Heart left ventricle (tissue), 16 donors: ENCODE measurements at regions of chr1 and their contacts with region 1.

Region 1: GRCh38 chr1:86704458-86704971 is at the start of gene SH3GLB1:
- DNase-seq: peak; percentile 88 to 94 (median 91)
- ATAC-seq: peak; percentile 83 to 96 (median 91)
- H3K4me3 ChIP-seq: peak within 1 kb of the TSS; percentile 63 to 96 (median 89)
- H3K27ac ChIP-seq: peak within 1 kb of the TSS; percentile 95 to 100 (median 99)
- H3K4me1 ChIP-seq: peaks cover 0 to 49% (median 36%) of the 10 kb centered on the region in 12 donors
- H3K27me3 ChIP-seq: no peaks in the 10 kb centered on the region
- CTCF ChIP-seq: peak; percentile 90 to 99 (median 97)
- POLR2A ChIP-seq: peak; percentile 14 to 64
- total RNA-seq, gene SH3GLB1: 53.6 to 203 (median 127) TPM

Region 2: DNA sequence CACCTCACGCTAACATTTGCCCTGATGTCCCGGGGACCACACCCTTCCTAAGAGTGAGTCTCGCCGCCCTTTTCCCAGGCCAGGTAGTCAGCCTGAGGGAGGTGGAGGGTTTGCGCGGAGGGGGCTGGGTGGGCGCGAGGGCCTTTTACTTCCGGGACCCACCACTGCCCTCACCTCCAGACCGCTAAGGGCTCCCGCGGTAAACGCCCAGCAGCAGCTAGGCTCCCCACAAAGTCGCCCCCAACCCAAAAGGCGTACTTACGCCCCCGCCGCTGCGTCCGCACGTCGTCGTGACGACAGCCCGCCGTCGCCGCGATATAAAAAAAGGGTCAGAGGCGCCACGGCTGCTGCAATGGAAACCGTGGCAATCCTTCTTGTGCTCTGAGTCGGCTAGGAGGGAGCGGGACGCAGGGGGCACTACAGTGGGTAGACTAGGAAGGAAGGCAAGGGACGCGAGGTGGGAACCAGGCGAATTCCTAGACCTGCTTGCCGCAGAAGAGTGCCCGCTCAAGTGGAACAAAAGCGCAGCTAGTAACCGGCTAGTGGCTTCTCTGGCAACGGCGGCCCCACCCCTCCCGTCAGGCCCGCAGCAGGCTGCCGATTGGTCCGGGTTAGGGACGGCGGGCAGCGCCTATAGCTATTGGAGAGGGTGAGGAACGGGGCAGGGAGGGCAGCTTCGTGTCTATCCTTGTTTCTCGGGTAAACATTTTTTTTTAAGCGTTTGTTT is 308.6 kb before region 1 on chr1 and contains the start of gene ODF2L:
- intact Hi-C with region 1: loop called in 3 of 10 experiments (anchors 5 to 10 kb)
- DNase-seq: peak; percentile 90 to 95 (median 92)
- ATAC-seq: peak; percentile 99 to 100 (median 100)
- H3K4me3 ChIP-seq: peak within 1 kb of the TSS; percentile 55 to 95 (median 82)
- H3K27ac ChIP-seq: peak within 1 kb of the TSS in 11 of 12 donors; percentile 66 to 89 (median 81)
- H3K4me1 ChIP-seq: peaks cover 0 to 30% (median 12%) of the 10 kb centered on the region in 12 donors
- H3K27me3 ChIP-seq: no peaks in the 10 kb centered on the region
- CTCF ChIP-seq: no peak
- POLR2A ChIP-seq: peak in 1 of 2 donors; percentile 78
- total RNA-seq, gene ODF2L: 6.2 to 23.7 (median 12.3) TPM

Region 3: GRCh38 chr1:86499987-86500593 is 204.4 kb before region 1 on chr1:
- intact Hi-C with region 1: loop called in 5 of 10 experiments (anchors 2 to 10 kb)
- DNase-seq: no peak
- ATAC-seq: no peak
- H3K4me3 ChIP-seq: no peak overlapping the region
- H3K27ac ChIP-seq: peak overlapping the region in 6 of 12 donors; percentile 10 to 94 (median 41)
- H3K4me1 ChIP-seq: peaks cover 0 to 37% (median 16%) of the 10 kb centered on the region in 12 donors
- H3K27me3 ChIP-seq: no peaks in the 10 kb centered on the region
- CTCF ChIP-seq: peak; percentile 73 to 99 (median 89)
- POLR2A ChIP-seq: no peak

Region 4: DNA sequence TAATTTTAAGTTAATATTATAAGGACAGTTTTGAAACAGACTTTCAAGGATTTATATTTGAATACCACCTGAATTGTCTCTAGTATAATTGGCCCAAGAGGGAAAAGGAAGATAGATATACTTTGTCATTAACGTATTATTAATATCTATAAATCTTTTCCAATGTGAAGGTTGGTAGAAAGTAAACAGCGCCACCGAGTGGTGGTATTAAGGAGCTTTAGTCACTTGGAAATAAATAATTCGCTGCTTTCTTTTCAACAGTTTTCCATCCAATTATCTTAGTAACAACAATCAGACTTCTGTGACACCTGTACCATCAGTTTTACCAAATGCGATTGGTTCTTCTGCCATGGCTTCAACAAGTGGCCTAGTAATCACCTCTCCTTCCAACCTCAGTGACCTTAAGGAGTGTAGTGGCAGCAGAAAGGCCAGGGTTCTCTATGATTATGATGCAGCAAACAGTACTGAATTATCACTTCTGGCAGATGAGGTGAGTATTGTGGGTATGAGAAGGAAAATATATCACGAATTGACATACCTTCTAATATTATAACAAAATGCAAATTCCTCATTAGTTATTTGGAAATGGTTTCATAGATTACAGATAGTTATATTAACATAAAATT is 37.5 kb after region 1 on chr1:
- intact Hi-C with region 1: loop called in 4 of 10 experiments (anchors 2 to 5 kb)
- DNase-seq: peak in 1 of 5 donors; percentile 32
- ATAC-seq: no peak
- H3K4me3 ChIP-seq: no peak overlapping the region
- H3K27ac ChIP-seq: no peak overlapping the region
- H3K4me1 ChIP-seq: peaks cover 0 to 25% (median 8%) of the 10 kb centered on the region in 12 donors
- H3K27me3 ChIP-seq: no peaks in the 10 kb centered on the region
- CTCF ChIP-seq: peak; percentile 55 to 77 (median 67)
- POLR2A ChIP-seq: no peak

Region 5: DNA sequence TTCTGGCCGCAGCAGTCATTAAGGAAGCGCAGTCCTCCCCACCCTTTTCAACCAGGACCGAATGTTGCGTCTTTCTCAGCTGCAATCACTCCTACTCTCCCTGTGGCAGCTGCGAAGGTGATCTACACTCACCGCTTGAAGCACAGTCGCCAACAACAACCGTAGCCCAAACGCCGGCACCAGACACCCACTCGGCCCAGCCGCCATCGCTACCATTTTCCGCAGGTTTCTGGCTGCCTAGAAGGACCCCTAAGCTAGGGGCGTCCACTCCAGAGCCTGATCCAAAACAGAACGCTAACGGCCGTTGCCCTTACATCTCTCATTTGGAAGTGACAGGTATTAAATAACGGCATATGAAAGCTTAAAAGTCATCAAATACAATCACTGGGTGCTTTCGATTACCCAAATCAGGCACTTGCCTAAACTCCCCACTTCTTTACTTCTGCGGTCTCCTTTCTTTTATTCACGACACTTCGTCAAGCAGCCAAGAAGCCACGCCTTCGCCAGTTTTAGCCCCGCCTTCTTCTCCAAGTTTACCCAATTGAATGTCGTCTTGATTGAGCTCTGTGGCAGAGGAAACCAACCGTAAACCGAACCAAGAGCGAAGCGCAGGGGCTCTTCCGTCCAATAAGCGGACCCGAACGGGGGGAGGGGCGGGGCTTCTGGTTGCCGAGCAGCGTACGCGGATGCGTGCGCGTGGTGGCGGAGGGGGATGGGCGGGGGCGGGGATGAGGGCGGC is 209.6 kb after region 1 on chr1 and contains the start of gene SELENOF:
- intact Hi-C with region 1: loop called in 7 of 10 experiments (anchors 2 to 10 kb)
- DNase-seq: peak; percentile 99 to 100 (median 99)
- ATAC-seq: peak; percentile 96 to 99 (median 98)
- H3K4me3 ChIP-seq: peak within 1 kb of the TSS; percentile 60 to 95 (median 86)
- H3K27ac ChIP-seq: peak within 1 kb of the TSS; percentile 88 to 98 (median 96)
- H3K4me1 ChIP-seq: peaks cover 3 to 38% (median 26%) of the 10 kb centered on the region in 12 donors
- H3K27me3 ChIP-seq: no peaks in the 10 kb centered on the region
- CTCF ChIP-seq: no peak
- POLR2A ChIP-seq: peak; percentile 30 to 70
- total RNA-seq, gene SELENOF: 46.8 to 125 (median 76.1) TPM

Region 6: DNA sequence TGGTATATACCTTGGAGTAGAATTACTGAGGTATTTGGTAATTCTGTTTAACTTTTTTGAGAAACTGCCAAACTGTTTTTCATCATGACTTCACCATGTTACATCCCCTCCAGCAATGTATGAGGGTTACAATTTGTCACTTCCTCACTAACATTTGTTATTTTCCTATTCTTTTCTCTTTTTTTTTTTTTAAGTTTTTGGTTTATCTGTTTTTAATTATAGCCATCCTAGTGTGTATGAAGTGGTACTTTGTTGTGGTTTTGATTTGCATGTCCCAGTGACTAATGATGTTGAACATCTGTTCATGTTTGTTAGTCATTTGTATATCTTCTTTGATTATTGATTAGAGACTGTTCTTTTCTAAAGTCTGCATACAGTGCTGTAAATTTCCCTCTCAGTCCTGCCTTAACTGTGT is 357.2 kb after region 1 on chr1:
- intact Hi-C with region 1: no loop called
- DNase-seq: no peak
- ATAC-seq: no peak
- H3K4me3 ChIP-seq: no peak overlapping the region
- H3K27ac ChIP-seq: no peak overlapping the region
- H3K4me1 ChIP-seq: peaks cover 0 to 18% (median 7%) of the 10 kb centered on the region in 12 donors
- H3K27me3 ChIP-seq: no peaks in the 10 kb centered on the region
- CTCF ChIP-seq: no peak
- POLR2A ChIP-seq: no peak

Region 7: GRCh38 chr1:87077959-87078639 is 373.6 kb after region 1 on chr1:
- intact Hi-C with region 1: loop called in 2 of 10 experiments (anchors 10 kb)
- DNase-seq: no peak
- ATAC-seq: no peak
- H3K4me3 ChIP-seq: no peak overlapping the region
- H3K27ac ChIP-seq: no peak overlapping the region
- H3K4me1 ChIP-seq: peaks cover 0 to 14% (median 1%) of the 10 kb centered on the region in 12 donors
- H3K27me3 ChIP-seq: no peaks in the 10 kb centered on the region
- CTCF ChIP-seq: no peak
- POLR2A ChIP-seq: no peak

Region 8: DNA sequence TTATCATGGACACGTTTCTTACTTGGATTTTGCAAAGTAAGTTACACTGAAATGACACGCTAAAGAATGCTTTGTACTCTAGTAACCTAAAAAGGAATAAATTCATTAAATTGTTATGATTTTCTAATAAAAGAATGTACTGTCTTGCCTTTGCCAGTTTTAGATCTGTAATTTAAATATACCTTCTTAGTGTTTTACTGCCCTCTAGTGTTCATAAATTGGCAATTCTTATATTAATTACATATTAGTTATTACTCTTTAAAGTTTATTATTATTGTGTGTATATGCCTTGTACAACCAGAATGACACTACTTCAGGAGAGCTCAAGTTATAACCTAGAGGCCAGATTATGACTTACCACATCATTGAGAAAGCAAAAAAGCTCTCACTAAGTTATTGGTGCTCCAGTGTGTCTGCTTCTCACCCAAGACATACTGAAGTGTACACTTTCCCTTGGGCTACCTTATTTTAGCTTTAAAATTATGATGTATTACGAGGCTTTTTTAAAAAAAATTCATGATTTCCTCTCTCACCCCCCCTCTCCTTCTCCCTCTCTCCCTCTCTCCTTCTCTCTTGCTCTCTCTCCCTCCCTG is 379.8 kb after region 1 on chr1:
- intact Hi-C with region 1: loop called in 2 of 10 experiments (anchors 10 kb)
- DNase-seq: no peak
- ATAC-seq: peak in 1 of 4 donors; percentile 42
- H3K4me3 ChIP-seq: no peak overlapping the region
- H3K27ac ChIP-seq: no peak overlapping the region
- H3K4me1 ChIP-seq: peaks cover 0 to 8% (median 4%) of the 10 kb centered on the region in 12 donors
- H3K27me3 ChIP-seq: no peaks in the 10 kb centered on the region
- CTCF ChIP-seq: peak; percentile 57 to 85 (median 72)
- POLR2A ChIP-seq: no peak